ENCODE measurements at regions of chr7 and their contacts with region 1.

Region 1: DNA sequence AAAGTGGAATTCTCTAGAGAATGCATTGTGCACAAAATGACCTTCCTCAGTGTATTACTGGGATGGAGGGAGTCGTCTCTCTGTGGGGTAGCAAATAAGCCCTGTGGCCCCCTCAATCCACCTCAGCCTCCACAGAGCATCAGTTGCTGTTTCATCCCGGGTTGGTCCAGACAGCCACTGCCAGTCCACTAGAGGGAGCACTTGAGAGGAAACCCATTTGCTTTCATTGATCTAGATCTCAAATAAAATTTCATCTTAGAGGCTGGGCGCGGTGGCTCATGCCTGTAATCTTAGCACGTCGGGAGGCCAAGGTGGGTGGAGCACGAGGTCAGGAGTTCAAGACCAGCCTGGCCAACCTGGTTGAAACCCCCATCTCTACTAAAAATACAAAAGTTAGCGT is 1128.7 kb downstream of the CNTNAP2 start:
- DNase-seq: peak in 1 of 2 experiments; percentile 20
- H3K4me3 ChIP-seq: no peak overlapping the region
- H3K27ac ChIP-seq: no peak overlapping the region
- H3K4me1 ChIP-seq: no peaks in the 10 kb centered on the region
- H3K27me3 ChIP-seq: no peaks in the 10 kb centered on the region
- CTCF ChIP-seq: peak; percentile 86

Region 2: DNA sequence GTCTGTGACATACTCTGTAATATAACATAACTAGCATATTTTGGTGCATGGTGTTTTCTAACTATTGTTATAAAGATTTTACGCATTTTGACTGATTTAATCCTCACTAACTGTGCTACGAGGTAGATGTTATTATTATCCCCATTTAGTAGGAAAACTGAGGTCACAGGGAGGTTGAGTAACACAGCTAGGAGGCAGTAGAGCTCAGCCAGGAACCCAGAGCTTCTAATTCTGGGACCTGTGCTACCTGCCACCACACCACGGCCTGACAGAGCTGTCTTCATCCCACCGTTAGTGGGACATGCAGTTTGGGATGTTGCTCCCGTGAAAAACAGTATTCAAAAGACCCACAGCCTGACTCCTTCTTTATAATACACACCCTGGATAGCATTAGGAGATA is 166.2 kb before region 1 on chr7:
- CTCF ChIA-PET with region 1: no interaction called
- POLR2A ChIA-PET with region 1: no interaction called
- intact Hi-C with region 1: no loop called
- DNase-seq: no peak
- H3K4me3 ChIP-seq: no peak overlapping the region
- H3K27ac ChIP-seq: no peak overlapping the region
- H3K4me1 ChIP-seq: no peaks in the 10 kb centered on the region
- H3K27me3 ChIP-seq: no peaks in the 10 kb centered on the region; the same call in 1 of the 2 replicates
- CTCF ChIP-seq: no peak

Region 3: GRCh38 chr7:147231275-147231674 is 14.0 kb before region 1 on chr7:
- CTCF ChIA-PET with region 1: no interaction called
- POLR2A ChIA-PET with region 1: no interaction called
- intact Hi-C with region 1: no loop called
- DNase-seq: no peak
- H3K4me3 ChIP-seq: no peak overlapping the region
- H3K27ac ChIP-seq: no peak overlapping the region
- H3K4me1 ChIP-seq: no peaks in the 10 kb centered on the region
- H3K27me3 ChIP-seq: no peaks in the 10 kb centered on the region
- CTCF ChIP-seq: no peak

Region 4: DNA sequence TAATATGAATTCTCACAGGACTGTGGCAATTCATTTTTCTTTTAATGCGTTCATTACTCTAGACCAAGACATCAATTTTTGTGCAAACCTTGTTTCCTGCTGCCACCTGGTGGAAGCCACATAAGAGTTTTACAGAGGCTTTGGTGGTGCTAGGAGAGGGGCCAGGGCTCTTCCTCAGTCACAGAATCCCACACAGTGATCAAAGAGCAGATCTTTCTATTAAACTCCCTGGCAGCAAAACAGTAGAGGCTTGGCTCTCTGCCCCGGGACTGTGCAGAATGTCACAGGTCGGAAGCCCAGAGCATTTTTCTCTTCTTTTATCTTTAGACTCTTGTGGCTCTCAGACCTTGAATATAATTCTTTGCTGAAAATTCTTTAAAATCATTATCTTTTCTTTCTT is 838.8 kb after region 1 on chr7:
- CTCF ChIA-PET with region 1: no interaction called
- POLR2A ChIA-PET with region 1: no interaction called
- intact Hi-C with region 1: loop called (anchors 2 kb)
- DNase-seq: peak; percentile 20 to 38
- H3K4me3 ChIP-seq: no peak overlapping the region
- H3K27ac ChIP-seq: no peak overlapping the region
- H3K4me1 ChIP-seq: no peaks in the 10 kb centered on the region
- H3K27me3 ChIP-seq: no peaks in the 10 kb centered on the region
- CTCF ChIP-seq: peak; percentile 78

Region 5: DNA sequence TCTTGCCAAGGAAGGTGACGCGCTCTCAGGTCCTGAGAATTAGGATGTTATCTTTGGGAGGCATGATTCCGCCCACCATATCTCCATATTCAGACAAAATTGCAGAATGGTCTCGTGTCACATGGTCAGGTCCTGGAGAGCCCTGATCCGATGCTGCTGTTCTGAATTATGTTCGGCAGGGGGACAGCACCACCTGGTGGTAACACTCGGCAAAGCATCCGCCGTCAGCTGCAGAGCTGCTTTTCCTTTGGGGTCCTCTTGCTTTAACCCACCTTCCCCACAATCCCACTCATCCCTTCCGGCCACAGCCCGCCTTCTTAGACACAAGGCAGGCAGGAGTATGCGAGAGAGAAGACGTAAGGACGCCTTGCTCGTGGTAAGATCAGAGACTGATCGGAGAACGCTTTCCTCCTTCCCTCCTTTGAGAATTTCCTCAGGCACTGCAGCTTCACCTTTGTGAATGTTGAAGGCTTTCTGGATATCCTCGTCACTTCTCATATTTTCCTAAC is 1017.5 kb after region 1 on chr7:
- CTCF ChIA-PET with region 1: no interaction called
- POLR2A ChIA-PET with region 1: no interaction called
- intact Hi-C with region 1: loop called (anchors 10 kb)
- DNase-seq: peak in 1 of 2 experiments; percentile 60
- H3K4me3 ChIP-seq: no peak overlapping the region
- H3K27ac ChIP-seq: no peak overlapping the region
- H3K4me1 ChIP-seq: no peaks in the 10 kb centered on the region
- H3K27me3 ChIP-seq: peaks cover 45% of the 10 kb centered on the region
- CTCF ChIP-seq: peak; percentile 95